Naive thymus-derived CD4-positive, alpha-beta T cell (primary cell): ENCODE measurements at regions of chr3 and their contacts with region 1.

Region 1: DNA sequence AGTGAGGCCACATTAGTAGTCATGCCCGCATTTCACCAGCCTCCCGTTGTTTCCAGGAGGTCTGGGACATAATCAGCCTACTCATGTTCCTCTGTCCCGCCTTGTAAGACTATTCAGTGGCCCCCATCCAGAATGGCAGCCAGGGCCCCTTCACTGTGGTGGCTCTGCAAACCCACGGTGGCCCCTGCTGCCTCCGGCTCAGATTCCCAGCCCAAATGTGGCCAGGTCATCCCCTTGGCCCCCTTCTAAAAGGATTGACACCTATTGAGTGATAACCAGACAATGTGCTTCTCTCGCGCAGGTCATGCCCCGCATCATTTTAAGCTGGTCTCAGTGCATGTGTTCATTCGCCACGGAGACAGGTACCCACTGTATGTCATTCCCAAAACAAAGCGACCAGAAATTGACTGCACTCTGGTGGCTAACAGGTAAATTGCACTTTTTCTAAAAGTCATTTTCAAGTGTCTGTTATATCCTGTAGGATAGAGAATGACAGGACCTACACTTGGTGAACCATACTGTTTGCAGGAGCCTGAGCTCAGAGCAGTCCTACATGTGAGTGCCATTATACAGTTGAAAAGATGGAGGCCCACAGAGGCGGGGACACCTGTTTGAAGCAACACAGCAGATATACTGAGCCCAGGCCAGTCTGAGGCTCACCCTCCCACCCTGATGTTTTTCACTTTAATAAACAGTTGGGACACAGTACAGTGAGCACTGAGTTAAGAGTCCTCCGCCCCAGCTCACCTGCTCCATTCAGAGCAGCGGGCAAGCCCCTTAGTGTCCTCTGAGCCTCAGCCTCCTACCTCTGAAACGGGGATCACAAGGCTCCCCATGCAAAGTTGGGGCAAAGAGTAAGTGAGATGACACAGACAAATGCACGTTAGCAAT is 47.7 kb downstream of the PXYLP1 start:
- DNase-seq: peak in 7 of 9 donors; percentile 23 to 58 (median 46)
- ATAC-seq: peak; percentile 82
- H3K4me3 ChIP-seq: no peak overlapping the region
- H3K4me3 Mint-ChIP-seq: peak overlapping the region in 1 of 10 donors; percentile 17
- H3K27ac ChIP-seq: no peak overlapping the region
- H3K27ac Mint-ChIP-seq: peak overlapping the region in 6 of 9 donors; percentile 1 to 83 (median 44)
- H3K4me1 ChIP-seq: peaks cover 10 to 19% of the 10 kb centered on the region in 2 donors
- H3K4me1 Mint-ChIP-seq: peaks cover 14 to 36% (median 21%) of the 10 kb centered on the region in 7 donors
- H3K27me3 ChIP-seq: no peaks in the 10 kb centered on the region
- H3K27me3 Mint-ChIP-seq: no peaks in the 10 kb centered on the region

Region 2: GRCh38 chr3:140898340-140899180 is 380.8 kb before region 1 on chr3:
- CTCF ChIA-PET with region 1: no interaction called
- POLR2A ChIA-PET with region 1: no interaction called
- intact Hi-C with region 1: loop called in 1 of 2 experiments (anchors 1 kb)
- DNase-seq: peak in 7 of 9 donors; percentile 12 to 60 (median 38)
- ATAC-seq: peak; percentile 83
- H3K4me3 ChIP-seq: no peak overlapping the region
- H3K4me3 Mint-ChIP-seq: no peak overlapping the region
- H3K27ac ChIP-seq: no peak overlapping the region
- H3K27ac Mint-ChIP-seq: no peak overlapping the region
- H3K4me1 ChIP-seq: no peaks in the 10 kb centered on the region
- H3K4me1 Mint-ChIP-seq: peaks cover 0 to 2% (median 0%) of the 10 kb centered on the region in 7 donors
- H3K27me3 ChIP-seq: no peaks in the 10 kb centered on the region
- H3K27me3 Mint-ChIP-seq: peaks cover 22 to 35% (median 25%) of the 10 kb centered on the region in 5 donors

Region 3: GRCh38 chr3:141050576-141051442 is 228.5 kb before region 1 on chr3 and contains the start of gene SPSB4:
- CTCF ChIA-PET with region 1: no interaction called
- POLR2A ChIA-PET with region 1: no interaction called
- intact Hi-C with region 1: no loop called
- DNase-seq: peak in 1 of 9 donors; percentile 30
- ATAC-seq: peak; percentile 33
- H3K4me3 ChIP-seq: no peak within 1 kb of the TSS
- H3K4me3 Mint-ChIP-seq: peak within 1 kb of the TSS; percentile 48 to 82 (median 68)
- H3K27ac ChIP-seq: no peak within 1 kb of the TSS
- H3K27ac Mint-ChIP-seq: no peak within 1 kb of the TSS
- H3K4me1 ChIP-seq: no peaks in the 10 kb centered on the region
- H3K4me1 Mint-ChIP-seq: peaks cover 6 to 16% (median 15%) of the 10 kb centered on the region in 7 donors
- H3K27me3 ChIP-seq: peaks cover 0 to 3% of the 10 kb centered on the region in 2 donors
- H3K27me3 Mint-ChIP-seq: peaks cover 63 to 75% (median 68%) of the 10 kb centered on the region in 5 donors
- total RNA-seq, gene SPSB4: not detected

Region 4: DNA sequence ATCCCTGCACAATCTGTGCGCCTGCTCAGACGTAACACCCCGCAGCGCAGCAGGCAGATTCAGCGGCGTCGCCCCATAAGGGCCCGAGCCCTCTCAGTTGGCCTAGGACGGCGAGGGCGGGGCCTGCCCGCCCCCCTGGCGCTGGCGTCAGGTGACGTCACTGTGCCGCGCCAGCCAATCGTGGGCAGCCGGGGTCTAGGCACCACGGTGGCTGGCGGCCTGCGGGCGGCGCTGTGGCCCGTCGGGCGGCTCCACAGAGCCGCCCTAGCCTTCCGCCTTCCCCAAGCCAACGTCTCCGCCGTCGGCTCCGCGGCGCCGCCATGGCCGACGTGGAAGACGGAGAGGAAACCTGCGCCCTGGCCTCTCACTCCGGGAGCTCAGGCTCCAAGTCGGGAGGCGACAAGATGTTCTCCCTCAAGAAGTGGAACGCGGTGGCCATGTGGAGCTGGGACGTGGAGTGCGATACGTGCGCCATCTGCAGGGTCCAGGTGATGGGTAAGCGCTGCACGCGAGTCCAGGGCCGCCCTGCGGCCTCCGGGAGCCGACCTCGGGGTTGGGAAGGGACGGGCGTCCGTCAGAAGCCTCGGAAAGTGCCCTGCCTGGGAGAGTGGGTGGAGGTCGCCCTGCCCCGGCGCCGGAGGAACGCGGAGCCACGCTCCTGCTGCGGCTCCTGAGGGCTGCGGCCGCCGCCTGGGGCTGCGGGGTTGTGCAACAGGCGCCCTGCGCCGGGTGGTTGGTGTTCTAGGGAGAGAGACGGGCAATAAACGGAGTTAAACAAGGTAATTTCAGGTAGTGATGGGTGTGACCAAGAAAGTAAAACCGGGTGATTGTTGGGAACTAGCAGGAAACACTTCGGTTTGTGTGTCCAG is 458.9 kb after region 1 on chr3 and contains the start of gene RNF7:
- CTCF ChIA-PET with region 1: no interaction called
- POLR2A ChIA-PET with region 1: no interaction called
- intact Hi-C with region 1: no loop called
- DNase-seq: peak; percentile 95 to 98 (median 98)
- ATAC-seq: peak; percentile 96
- H3K4me3 ChIP-seq: peak within 1 kb of the TSS; percentile 94
- H3K4me3 Mint-ChIP-seq: peak within 1 kb of the TSS; percentile 92 to 100 (median 98)
- H3K27ac ChIP-seq: peak within 1 kb of the TSS; percentile 95
- H3K27ac Mint-ChIP-seq: peak within 1 kb of the TSS; percentile 92 to 99 (median 98)
- H3K4me1 ChIP-seq: peaks cover 20 to 25% of the 10 kb centered on the region in 2 donors
- H3K4me1 Mint-ChIP-seq: peaks cover 21 to 47% (median 44%) of the 10 kb centered on the region in 7 donors
- H3K27me3 ChIP-seq: no peaks in the 10 kb centered on the region
- H3K27me3 Mint-ChIP-seq: peaks cover 0 to 5% (median 0%) of the 10 kb centered on the region in 5 donors
- total RNA-seq, gene RNF7: 45.6 to 63.2 (median 57.3) TPM